ENCODE measurements at regions of chr17 and their contacts with region 1.

Region 1: GRCh38 chr17:79839363-79840268 is at the start of gene CBX4:
- DNase-seq: peak; percentile 93
- ATAC-seq: peak; percentile 73
- H3K4me3 ChIP-seq: peak within 1 kb of the TSS; percentile 63 to 99 (median 94)
- H3K4me3 Mint-ChIP-seq: peak within 1 kb of the TSS; percentile 98
- H3K27ac ChIP-seq: peak within 1 kb of the TSS; percentile 66 to 67
- H3K27ac Mint-ChIP-seq: peak within 1 kb of the TSS; percentile 98
- H3K4me1 ChIP-seq: peaks cover 71 to 83% of the 10 kb centered on the region in 2 donors
- H3K4me1 Mint-ChIP-seq: peaks cover 55% of the 10 kb centered on the region
- H3K27me3 ChIP-seq: peaks cover 0 to 49% (median 31%) of the 10 kb centered on the region in 4 experiments
- H3K27me3 Mint-ChIP-seq: peaks cover 15% of the 10 kb centered on the region
- CTCF ChIP-seq: peak; percentile 74
- total RNA-seq, gene CBX4: 73.2 and 81.9 TPM in 2 replicates

Region 2: GRCh38 chr17:78133971-78134898 is 1705.4 kb before region 1 on chr17:
- CTCF ChIA-PET with region 1: no interaction called
- POLR2A ChIA-PET with region 1: no interaction called
- intact Hi-C with region 1: loop called (anchors 10 kb)
- DNase-seq: peak; percentile 90
- ATAC-seq: peak; percentile 7
- H3K4me3 ChIP-seq: peak overlapping the region in 3 of 5 experiments; percentile 6 to 35 (median 23)
- H3K4me3 Mint-ChIP-seq: peak overlapping the region; percentile 99
- H3K27ac ChIP-seq: peak overlapping the region; percentile 88 to 92
- H3K27ac Mint-ChIP-seq: peak overlapping the region; percentile 95
- H3K4me1 ChIP-seq: peaks cover 66 to 88% of the 10 kb centered on the region in 2 donors
- H3K4me1 Mint-ChIP-seq: peaks cover 79% of the 10 kb centered on the region
- H3K27me3 ChIP-seq: no peaks in the 10 kb centered on the region
- H3K27me3 Mint-ChIP-seq: no peaks in the 10 kb centered on the region
- CTCF ChIP-seq: peak; percentile 80

Region 3: DNA sequence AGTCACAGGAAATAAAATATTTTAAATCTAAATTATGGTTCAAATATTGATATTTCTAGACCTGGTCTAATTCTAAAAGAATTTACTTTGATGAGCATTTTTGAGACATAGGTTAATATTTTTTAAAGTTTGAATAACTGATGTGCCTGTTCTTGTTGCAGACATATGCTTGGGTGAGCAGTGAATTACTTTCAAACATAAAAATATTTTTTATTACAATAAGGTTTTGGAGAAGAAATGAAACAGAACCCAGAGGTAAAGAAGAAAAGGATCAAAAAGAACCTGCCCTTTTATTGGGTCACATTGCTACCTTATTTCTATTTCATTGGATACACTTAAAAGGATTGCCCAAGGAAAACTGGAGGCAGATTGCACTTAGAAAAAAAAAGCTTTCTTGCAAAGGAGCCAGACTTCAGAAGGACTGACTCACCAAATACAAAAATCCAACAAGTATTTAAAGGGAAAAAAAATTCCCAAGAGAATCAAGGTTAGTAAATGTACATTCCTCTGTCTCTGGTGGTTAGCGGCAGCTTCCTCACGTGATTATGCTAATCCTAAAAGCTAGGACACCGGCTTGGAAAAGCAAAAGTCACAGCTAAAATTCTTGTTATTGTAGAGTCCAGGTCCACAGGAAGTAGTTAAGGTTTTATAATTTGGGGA is 90.3 kb before region 1 on chr17:
- CTCF ChIA-PET with region 1: interaction called, 6 read pairs
- POLR2A ChIA-PET with region 1: no interaction called
- intact Hi-C with region 1: loop called (anchors 5 kb)
- DNase-seq: no peak
- ATAC-seq: no peak
- H3K4me3 ChIP-seq: no peak overlapping the region
- H3K4me3 Mint-ChIP-seq: no peak overlapping the region
- H3K27ac ChIP-seq: no peak overlapping the region
- H3K27ac Mint-ChIP-seq: no peak overlapping the region
- H3K4me1 ChIP-seq: peaks cover 25 to 28% of the 10 kb centered on the region in 2 donors
- H3K4me1 Mint-ChIP-seq: peaks cover 23% of the 10 kb centered on the region
- H3K27me3 ChIP-seq: peaks cover 0 to 67% (median 33%) of the 10 kb centered on the region in 4 experiments
- H3K27me3 Mint-ChIP-seq: peaks cover 51% of the 10 kb centered on the region
- CTCF ChIP-seq: no peak

Region 4: GRCh38 chr17:79803997-79804855 is 35.4 kb before region 1 on chr17:
- CTCF ChIA-PET with region 1: interaction called, 18 read pairs
- POLR2A ChIA-PET with region 1: interaction called, 6 read pairs
- intact Hi-C with region 1: loop called (anchors 2 kb)
- DNase-seq: peak; percentile 86
- ATAC-seq: peak; percentile 85
- H3K4me3 ChIP-seq: peak overlapping the region in 3 of 5 experiments; percentile 31 to 42 (median 36)
- H3K4me3 Mint-ChIP-seq: peak overlapping the region; percentile 84
- H3K27ac ChIP-seq: no peak overlapping the region
- H3K27ac Mint-ChIP-seq: peak overlapping the region; percentile 89
- H3K4me1 ChIP-seq: peaks cover 49 to 92% of the 10 kb centered on the region in 2 donors
- H3K4me1 Mint-ChIP-seq: peaks cover 36% of the 10 kb centered on the region
- H3K27me3 ChIP-seq: peaks cover 0 to 98% (median 84%) of the 10 kb centered on the region in 4 experiments
- H3K27me3 Mint-ChIP-seq: peaks cover 65% of the 10 kb centered on the region
- CTCF ChIP-seq: no peak

Region 5: DNA sequence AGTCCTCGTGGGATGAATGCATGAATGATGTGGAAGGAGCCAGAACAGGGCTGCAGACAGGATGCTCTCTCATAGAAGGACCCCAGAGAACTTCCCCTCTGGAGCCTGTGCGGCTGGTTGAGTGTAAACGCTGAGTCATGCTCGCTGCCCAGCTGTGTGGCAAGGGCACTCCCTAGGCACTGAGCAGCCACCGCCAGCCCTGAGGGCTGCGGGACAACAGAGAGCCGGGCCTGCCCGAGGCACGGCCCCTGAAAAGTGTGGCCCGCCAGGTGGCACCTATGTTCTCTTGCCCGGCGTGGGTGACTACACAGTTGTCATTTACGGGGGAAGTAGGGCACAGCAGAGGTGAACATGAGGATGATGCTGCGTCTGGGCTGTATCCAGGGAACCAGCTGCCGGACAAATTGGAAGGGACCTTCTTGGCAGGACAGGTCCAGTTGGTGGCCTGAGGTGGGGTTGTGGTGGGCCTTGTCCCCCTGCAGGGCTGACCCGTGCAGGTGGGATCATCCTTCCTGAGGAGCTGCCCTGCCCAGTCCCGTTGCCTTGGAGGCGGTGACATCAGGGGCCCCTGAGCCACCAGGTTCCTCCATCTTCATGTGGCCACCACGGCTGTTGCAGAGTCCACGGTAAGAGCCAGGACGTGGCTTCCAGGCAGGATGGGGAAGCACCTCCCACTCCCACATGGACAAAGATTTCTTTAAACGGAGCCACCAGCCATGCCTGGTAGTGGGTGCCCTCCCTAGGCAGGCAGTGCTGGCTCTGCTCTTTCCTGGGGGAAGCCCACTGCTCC is 94.4 kb after region 1 on chr17:
- CTCF ChIA-PET with region 1: interaction called, 4 read pairs
- POLR2A ChIA-PET with region 1: interaction called, 7 read pairs
- intact Hi-C with region 1: loop called (anchors 5 kb)
- DNase-seq: peak; percentile 65
- ATAC-seq: peak; percentile 25
- H3K4me3 ChIP-seq: no peak overlapping the region
- H3K4me3 Mint-ChIP-seq: peak overlapping the region; percentile 59
- H3K27ac ChIP-seq: no peak overlapping the region
- H3K27ac Mint-ChIP-seq: peak overlapping the region; percentile 76
- H3K4me1 ChIP-seq: peaks cover 74 to 90% of the 10 kb centered on the region in 2 donors
- H3K4me1 Mint-ChIP-seq: peaks cover 80% of the 10 kb centered on the region
- H3K27me3 ChIP-seq: peaks cover 0 to 28% (median 12%) of the 10 kb centered on the region in 4 experiments
- H3K27me3 Mint-ChIP-seq: peaks cover 14% of the 10 kb centered on the region
- CTCF ChIP-seq: no peak